CD14-positive monocyte (primary cell): ENCODE measurements at regions of chr3 and their contacts with region 1.

Region 1: DNA sequence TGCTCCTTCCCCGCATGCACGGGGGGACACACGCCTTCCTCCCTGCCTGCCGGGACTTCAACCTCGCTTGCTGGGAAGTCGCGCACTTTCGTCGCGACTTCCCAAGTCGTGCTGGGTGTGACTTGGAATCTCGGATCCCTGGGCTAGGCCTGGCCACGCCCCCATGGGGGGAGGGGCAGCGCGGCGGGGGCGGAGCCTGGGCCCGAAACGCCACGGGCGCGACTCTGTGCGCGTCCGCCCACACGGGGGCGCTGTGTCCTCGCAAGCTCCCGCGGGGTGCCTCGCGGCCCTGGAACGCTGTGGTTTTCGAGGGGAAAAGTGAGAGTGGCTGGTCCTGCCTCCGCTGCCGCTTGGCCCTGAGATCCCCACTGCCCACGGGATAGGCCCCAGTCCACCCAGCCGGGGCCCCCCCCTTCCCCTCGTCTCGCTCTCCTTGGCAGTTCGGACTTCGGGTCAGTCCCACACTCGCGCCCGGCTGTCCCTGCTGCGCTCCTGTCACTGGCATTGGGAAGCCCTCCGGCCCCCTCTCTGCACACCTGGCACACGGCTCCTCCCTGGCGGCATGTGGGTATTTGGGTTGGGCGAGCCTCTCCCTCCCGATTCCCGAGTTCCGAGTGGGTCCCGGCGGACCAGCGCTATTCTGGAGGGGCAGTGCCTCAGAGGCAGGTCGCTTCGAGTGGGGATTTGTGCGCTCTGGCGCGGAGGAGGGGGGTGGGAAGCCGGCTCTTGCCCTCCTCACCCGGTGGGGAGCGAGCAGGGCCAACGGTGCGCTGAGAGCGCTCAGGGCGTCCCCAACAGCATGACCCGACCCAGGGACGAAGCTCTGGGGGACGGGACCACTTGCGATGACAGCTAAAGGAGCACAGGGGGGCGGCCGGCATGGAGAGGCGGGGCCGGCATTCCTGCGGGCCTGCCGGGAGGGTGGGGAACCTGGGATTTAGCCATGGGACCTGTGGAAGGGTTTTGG is 23.6 kb downstream of the SEC61A1 start:
- DNase-seq: peak; percentile 75 to 85 (median 83)
- H3K4me3 ChIP-seq: peak overlapping the region; percentile 39 to 78 (median 67)
- H3K4me3 Mint-ChIP-seq: peak overlapping the region; percentile 82 to 87
- H3K27ac ChIP-seq: peak overlapping the region; percentile 56 to 77
- H3K27ac Mint-ChIP-seq: peak overlapping the region; percentile 70 to 90 (median 87)
- H3K4me1 ChIP-seq: peaks cover 30 to 51% of the 10 kb centered on the region in 2 donors
- H3K4me1 Mint-ChIP-seq: peaks cover 37% of the 10 kb centered on the region
- H3K27me3 ChIP-seq: no peaks in the 10 kb centered on the region
- H3K27me3 Mint-ChIP-seq: peaks cover 0 to 2% (median 0%) of the 10 kb centered on the region in 3 donors
- CTCF ChIP-seq: peak; percentile 97

Region 2: GRCh38 chr3:127750226-127751031 is 325.4 kb before region 1 on chr3:
- intact Hi-C with region 1: no loop called
- DNase-seq: peak in 2 of 3 donors; percentile 50 to 96
- H3K4me3 ChIP-seq: no peak overlapping the region
- H3K4me3 Mint-ChIP-seq: peak overlapping the region in 1 of 2 donors; percentile 18
- H3K27ac ChIP-seq: peak overlapping the region in 1 of 2 donors; percentile 24
- H3K27ac Mint-ChIP-seq: peak overlapping the region; percentile 6 to 88 (median 51)
- H3K4me1 ChIP-seq: peaks cover 36 to 40% of the 10 kb centered on the region in 2 donors
- H3K4me1 Mint-ChIP-seq: peaks cover 49% of the 10 kb centered on the region
- H3K27me3 ChIP-seq: no peaks in the 10 kb centered on the region
- H3K27me3 Mint-ChIP-seq: peaks cover 3 to 10% (median 3%) of the 10 kb centered on the region in 3 donors
- CTCF ChIP-seq: no peak

Region 3: DNA sequence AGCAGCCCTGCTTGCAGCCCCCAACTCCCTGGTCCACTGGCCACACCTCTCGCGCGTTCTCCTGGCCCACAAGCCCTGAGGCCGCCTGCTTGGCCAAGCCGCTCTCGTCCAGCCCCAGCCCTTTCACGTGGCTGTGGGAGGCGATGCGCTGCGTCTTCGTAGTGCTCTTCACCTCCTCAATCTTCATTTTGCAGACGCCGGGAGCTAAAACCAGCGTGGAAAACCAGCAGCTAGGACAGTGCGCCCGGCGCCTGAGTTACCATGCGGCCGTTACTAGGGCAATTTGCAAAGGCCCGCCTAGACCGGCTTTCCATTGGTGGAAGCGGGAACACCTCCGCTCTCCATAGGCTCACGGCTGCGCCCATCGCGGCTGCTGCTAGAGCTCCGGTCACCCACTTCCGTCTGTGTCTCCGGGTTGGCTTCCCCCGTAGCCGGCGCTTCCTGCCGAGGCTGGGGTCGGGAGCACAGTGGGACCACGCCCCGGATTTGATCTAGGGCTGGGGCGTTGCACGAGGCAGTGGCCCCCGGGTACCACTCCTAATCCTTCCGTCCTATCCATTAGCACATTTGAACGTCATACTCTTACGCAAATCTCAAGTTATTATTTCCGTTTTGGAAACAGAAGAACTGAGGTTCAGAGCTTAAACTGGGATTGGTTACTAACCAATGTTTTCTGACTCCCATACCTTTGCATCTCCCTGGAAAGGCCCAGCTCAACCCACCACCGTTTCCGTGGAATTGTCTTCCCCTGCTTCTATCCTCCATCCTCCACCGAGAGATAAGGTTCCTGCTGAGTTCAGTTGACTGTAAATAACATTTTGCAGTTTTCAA is 48.0 kb after region 1 on chr3 and contains the start of gene RUVBL1:
- intact Hi-C with region 1: loop called (anchors 5 kb)
- DNase-seq: peak; percentile 95 to 98 (median 97)
- H3K4me3 ChIP-seq: peak within 1 kb of the TSS; percentile 60 to 88 (median 85)
- H3K4me3 Mint-ChIP-seq: peak within 1 kb of the TSS; percentile 93 to 96
- H3K27ac ChIP-seq: peak within 1 kb of the TSS; percentile 65 to 85
- H3K27ac Mint-ChIP-seq: peak within 1 kb of the TSS; percentile 90 to 96 (median 94)
- H3K4me1 ChIP-seq: peaks cover 18 to 19% of the 10 kb centered on the region in 2 donors
- H3K4me1 Mint-ChIP-seq: peaks cover 25% of the 10 kb centered on the region
- H3K27me3 ChIP-seq: no peaks in the 10 kb centered on the region
- H3K27me3 Mint-ChIP-seq: peaks cover 0 to 1% (median 0%) of the 10 kb centered on the region in 3 donors
- CTCF ChIP-seq: no peak
- polyA plus RNA-seq, gene RUVBL1: 11.0 to 16.2 (median 14.4) TPM

Region 4: DNA sequence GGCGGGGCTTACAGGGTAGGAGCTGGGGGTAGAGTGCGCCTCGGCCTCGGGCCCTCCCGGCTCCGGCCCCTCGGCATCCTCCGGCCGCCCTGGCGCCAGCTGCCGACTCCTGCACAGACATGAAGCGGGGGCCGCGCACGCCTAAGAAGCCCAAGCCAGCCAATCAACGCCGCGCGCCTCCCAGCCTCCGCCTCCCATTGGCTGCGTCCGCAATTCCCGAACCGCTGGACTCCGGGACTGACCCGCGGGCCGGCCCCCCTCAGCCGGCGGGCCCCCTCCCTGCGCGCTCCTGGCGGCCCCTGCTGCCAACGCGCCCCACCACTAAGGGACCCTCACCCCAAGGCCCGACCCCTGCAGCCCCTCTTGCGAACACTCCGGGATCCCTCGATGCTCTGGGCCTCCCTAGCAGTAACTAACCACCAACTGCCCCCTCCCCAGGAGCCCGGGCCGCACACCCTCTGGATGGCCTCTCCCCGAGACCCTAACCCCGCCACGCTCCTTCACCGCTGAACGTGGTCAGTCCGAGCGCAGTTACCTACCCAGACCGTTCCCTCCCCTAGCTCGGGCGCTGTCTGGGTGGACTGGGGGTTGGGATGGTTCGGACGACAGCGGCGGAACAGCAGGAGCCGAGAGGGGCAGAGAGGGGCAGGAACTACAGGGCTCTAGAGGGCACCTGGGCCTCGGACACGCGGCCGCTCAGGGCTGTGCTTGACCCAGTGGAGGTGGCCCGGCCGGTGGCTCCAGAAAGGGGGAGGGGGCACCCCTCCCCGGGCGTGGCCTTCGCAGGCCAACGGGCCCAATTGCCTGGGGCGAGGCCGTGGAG is 412.2 kb after region 1 on chr3:
- intact Hi-C with region 1: loop called in 1 of 2 experiments (anchors 10 kb)
- DNase-seq: peak; percentile 35 to 62 (median 46)
- H3K4me3 ChIP-seq: peak overlapping the region in 2 of 3 experiments; percentile 51 to 78
- H3K4me3 Mint-ChIP-seq: peak overlapping the region; percentile 85 to 97
- H3K27ac ChIP-seq: no peak overlapping the region
- H3K27ac Mint-ChIP-seq: peak overlapping the region in 1 of 7 donors; percentile 69
- H3K4me1 ChIP-seq: peaks cover 57 to 69% of the 10 kb centered on the region in 2 donors
- H3K4me1 Mint-ChIP-seq: peaks cover 55% of the 10 kb centered on the region
- H3K27me3 ChIP-seq: peaks cover 85 to 99% of the 10 kb centered on the region in 2 donors
- H3K27me3 Mint-ChIP-seq: peaks cover 87 to 100% (median 96%) of the 10 kb centered on the region in 3 donors
- CTCF ChIP-seq: no peak

Region 5: GRCh38 chr3:128617557-128618397 is 542.0 kb after region 1 on chr3:
- intact Hi-C with region 1: loop called in 1 of 2 experiments (anchors 10 kb)
- DNase-seq: peak; percentile 98 to 99 (median 98)
- H3K4me3 ChIP-seq: peak overlapping the region; percentile 71 to 95 (median 74)
- H3K4me3 Mint-ChIP-seq: peak overlapping the region; percentile 90 to 95
- H3K27ac ChIP-seq: peak overlapping the region; percentile 77 to 89
- H3K27ac Mint-ChIP-seq: peak overlapping the region; percentile 92 to 98 (median 94)
- H3K4me1 ChIP-seq: peaks cover 31 to 37% of the 10 kb centered on the region in 2 donors
- H3K4me1 Mint-ChIP-seq: peaks cover 24% of the 10 kb centered on the region
- H3K27me3 ChIP-seq: no peaks in the 10 kb centered on the region
- H3K27me3 Mint-ChIP-seq: peaks cover 0 to 2% (median 0%) of the 10 kb centered on the region in 3 donors
- CTCF ChIP-seq: peak; percentile 97